ENCODE measurements at regions of chr3 and their contacts with region 1.

Region 1: DNA sequence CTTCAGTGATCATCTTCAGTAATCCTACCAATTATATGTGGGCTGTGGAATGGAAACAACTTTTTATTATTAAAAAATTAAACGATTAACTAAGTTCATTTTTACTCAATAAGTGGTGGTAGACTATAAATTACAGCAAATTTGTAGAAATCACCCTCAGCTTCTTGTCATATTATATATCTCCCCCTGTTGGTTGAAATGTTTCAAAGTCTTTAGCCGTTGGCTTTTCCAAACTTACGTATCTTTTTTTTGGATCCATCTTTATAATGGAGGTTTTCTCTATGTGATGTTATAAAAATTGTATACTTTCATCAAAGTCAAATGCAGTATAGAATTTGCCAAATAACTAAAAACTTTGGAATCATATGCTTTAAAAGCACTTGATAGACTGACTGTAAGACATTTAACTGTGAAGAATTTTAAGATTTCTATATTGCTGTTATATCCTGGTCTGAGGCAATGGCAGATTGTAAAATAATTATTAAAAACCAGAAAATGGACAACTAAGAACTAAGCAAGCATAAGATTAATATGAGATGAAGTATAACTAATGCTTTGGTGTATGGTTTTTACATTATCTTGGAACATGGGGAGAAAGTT is 44.7 kb downstream of the ATP11B start:
- DNase-seq: no peak
- ATAC-seq: no peak
- H3K4me3 ChIP-seq: no peak overlapping the region
- H3K27ac ChIP-seq: no peak overlapping the region
- H3K4me1 ChIP-seq: no peaks in the 10 kb centered on the region
- H3K27me3 ChIP-seq: no peaks in the 10 kb centered on the region
- CTCF ChIP-seq: peak; percentile 52

Region 2: GRCh38 chr3:182490596-182491491 is 347.1 kb before region 1 on chr3:
- intact Hi-C with region 1: no loop called
- DNase-seq: no peak
- ATAC-seq: no peak
- H3K4me3 ChIP-seq: no peak overlapping the region
- H3K27ac ChIP-seq: no peak overlapping the region
- H3K4me1 ChIP-seq: no peaks in the 10 kb centered on the region
- H3K27me3 ChIP-seq: no peaks in the 10 kb centered on the region
- CTCF ChIP-seq: peak; percentile 20

Region 3: GRCh38 chr3:182713743-182714517 is 124.0 kb before region 1 on chr3:
- intact Hi-C with region 1: loop called (anchors 10 kb)
- DNase-seq: no peak
- ATAC-seq: peak; percentile 82
- H3K4me3 ChIP-seq: no peak overlapping the region
- H3K27ac ChIP-seq: no peak overlapping the region
- H3K4me1 ChIP-seq: no peaks in the 10 kb centered on the region
- H3K27me3 ChIP-seq: no peaks in the 10 kb centered on the region
- CTCF ChIP-seq: peak; percentile 55

Measured in lower lobe of right lung (tissue), 2 donors.